HCT116 (cell line): ENCODE measurements at regions of chr15 and their contacts with region 1.

Region 1: DNA sequence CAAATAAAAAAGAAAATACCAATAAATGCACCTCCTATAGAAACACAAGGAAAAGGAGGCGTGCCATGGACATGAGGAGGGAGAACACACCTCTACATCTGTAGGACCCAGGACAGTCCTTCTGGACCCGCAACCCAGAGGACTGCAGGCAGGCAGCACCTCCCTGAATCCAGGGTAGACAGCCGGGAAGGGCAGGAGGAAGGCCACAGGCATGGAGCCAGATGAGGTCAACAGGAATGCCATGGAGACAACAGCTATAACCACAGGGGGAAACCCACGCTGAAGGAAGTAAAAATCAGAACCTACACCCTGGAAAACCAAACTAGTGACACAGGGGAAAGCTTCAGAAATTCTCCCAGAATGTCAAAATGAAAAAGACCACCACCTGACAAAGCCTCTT is 248.8 kb upstream of the NSMCE3 start:
- DNase-seq: no peak
- ATAC-seq: no peak
- H3K4me3 ChIP-seq: no peak overlapping the region
- H3K27ac ChIP-seq: no peak overlapping the region
- H3K4me1 ChIP-seq: peaks cover 3 to 6% of the 10 kb centered on the region in 2 experiments; a peak in 2 of 4 replicates
- H3K27me3 ChIP-seq: peaks cover 38% of the 10 kb centered on the region
- CTCF ChIP-seq: no peak
- POLR2A ChIP-seq: no peak
- RAD21 ChIP-seq: no peak

Region 2: DNA sequence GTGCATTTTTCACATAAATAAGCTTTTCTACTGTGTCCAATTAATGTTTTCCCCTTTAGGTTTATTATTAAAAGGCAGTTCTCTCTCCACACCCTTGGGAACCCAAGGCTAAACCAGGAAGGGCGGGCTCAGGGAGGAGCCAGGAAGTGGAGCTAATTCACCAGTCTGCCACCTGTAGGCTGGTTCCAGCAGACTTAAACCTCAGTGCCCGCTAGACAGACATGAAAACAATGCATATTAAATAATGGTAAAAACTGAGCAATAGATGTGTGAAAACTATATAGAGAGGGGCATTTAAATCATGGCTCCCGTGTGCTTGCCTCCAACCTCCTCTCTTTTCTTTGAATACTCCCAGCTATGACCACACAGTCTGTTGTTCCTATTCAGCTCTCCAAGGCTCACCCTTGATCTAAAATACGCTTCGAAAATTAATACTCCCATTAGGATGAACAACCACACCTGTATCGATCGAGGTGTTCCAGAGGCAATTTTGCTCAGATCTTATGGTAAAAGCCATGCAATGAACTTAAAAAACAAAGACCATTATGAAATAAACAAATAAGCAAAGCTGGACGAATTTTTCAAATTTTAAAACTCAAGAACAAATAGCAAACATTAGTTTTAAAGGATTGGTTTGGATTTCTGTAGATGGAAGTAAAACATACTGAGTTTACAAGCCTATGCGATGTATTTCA is 50.5 kb after region 1 on chr15:
- CTCF ChIA-PET with region 1: no interaction called
- POLR2A ChIA-PET with region 1: no interaction called
- RAD21 ChIA-PET with region 1: no interaction called
- intact Hi-C with region 1: loop called (anchors 10 kb)
- DNase-seq: peak; percentile 38
- ATAC-seq: peak; percentile 100
- H3K4me3 ChIP-seq: no peak overlapping the region
- H3K27ac ChIP-seq: no peak overlapping the region
- H3K4me1 ChIP-seq: peaks cover 7% of the 10 kb centered on the region in 2 experiments; a peak in 3 of 4 replicates
- H3K27me3 ChIP-seq: peaks cover 9% of the 10 kb centered on the region; the same call in 1 of the 2 replicates
- CTCF ChIP-seq: peak; percentile 21 to 61 (median 53); a peak in 4 of 6 replicates
- POLR2A ChIP-seq: no peak
- RAD21 ChIP-seq: peak; percentile 19; the same call in 1 of the 2 replicates